Naive thymus-derived CD4-positive, alpha-beta T cell (primary cell): ENCODE measurements at regions of chr13 and their contacts with region 1.

Region 1: GRCh38 chr13:48975856-48976575 is at the start of gene FNDC3A:
- DNase-seq: peak; percentile 84 to 90 (median 86)
- ATAC-seq: peak; percentile 87
- H3K4me3 ChIP-seq: peak within 1 kb of the TSS; percentile 82
- H3K4me3 Mint-ChIP-seq: peak within 1 kb of the TSS; percentile 92 to 100 (median 98)
- H3K27ac ChIP-seq: peak within 1 kb of the TSS; percentile 95
- H3K27ac Mint-ChIP-seq: peak within 1 kb of the TSS; percentile 93 to 99 (median 99)
- H3K4me1 ChIP-seq: peaks cover 13 to 28% of the 10 kb centered on the region in 2 donors
- H3K4me1 Mint-ChIP-seq: peaks cover 35 to 69% (median 49%) of the 10 kb centered on the region in 7 donors
- H3K27me3 ChIP-seq: no peaks in the 10 kb centered on the region
- H3K27me3 Mint-ChIP-seq: peaks cover 0 to 6% (median 0%) of the 10 kb centered on the region in 5 donors
- total RNA-seq, gene FNDC3A: 34.2 to 46.4 (median 39.1) TPM

Region 2: DNA sequence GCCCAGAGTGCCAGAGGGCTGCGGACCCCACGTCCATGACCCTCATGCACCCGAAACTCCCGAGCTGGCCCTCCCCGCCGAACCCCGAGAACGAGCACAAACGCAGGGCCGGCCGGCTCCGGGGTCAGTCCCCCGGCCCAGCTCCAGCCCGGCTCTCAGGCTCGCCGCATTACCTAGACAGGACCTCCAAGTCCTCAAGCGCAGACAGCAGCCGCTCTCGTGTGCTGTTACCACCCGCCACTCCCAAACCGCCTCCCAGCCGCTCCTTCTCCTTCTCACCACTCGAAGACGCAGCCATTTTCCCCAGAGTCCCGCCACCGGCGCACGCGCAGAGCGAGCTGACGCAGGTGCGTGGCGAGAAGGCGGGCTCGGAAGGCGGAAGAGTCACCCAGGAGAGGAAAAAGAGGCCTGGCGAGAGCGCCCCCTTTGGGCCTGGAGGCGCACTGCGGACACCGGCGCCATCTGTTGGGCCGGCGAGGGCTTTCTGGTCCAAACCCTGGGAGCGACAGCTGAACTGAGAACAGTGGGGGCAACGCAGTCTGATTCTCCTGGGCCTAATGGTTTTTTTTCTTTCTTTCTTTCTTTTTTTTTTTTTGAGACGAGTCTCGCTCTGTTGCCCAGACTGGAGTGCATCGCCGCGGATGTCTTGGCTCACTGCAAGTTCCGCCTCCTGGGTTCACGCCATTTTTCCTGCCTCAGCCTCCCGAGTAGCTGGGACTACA is 881.1 kb before region 1 on chr13 and contains the start of gene MED4:
- CTCF ChIA-PET with region 1: no interaction called
- POLR2A ChIA-PET with region 1: interaction called, 6 read pairs
- intact Hi-C with region 1: loop called in 1 of 2 experiments (anchors 2 kb)
- DNase-seq: peak; percentile 94 to 99 (median 98)
- ATAC-seq: peak; percentile 100
- H3K4me3 ChIP-seq: peak within 1 kb of the TSS; percentile 90
- H3K4me3 Mint-ChIP-seq: peak within 1 kb of the TSS; percentile 94 to 99 (median 96)
- H3K27ac ChIP-seq: peak within 1 kb of the TSS; percentile 99
- H3K27ac Mint-ChIP-seq: peak within 1 kb of the TSS; percentile 92 to 98 (median 96)
- H3K4me1 ChIP-seq: peaks cover 13 to 26% of the 10 kb centered on the region in 2 donors
- H3K4me1 Mint-ChIP-seq: peaks cover 26 to 56% (median 48%) of the 10 kb centered on the region in 7 donors
- H3K27me3 ChIP-seq: no peaks in the 10 kb centered on the region
- H3K27me3 Mint-ChIP-seq: peaks cover 0 to 9% (median 0%) of the 10 kb centered on the region in 5 donors
- total RNA-seq, gene MED4: 43.4 to 60.9 (median 50.0) TPM

Region 3: DNA sequence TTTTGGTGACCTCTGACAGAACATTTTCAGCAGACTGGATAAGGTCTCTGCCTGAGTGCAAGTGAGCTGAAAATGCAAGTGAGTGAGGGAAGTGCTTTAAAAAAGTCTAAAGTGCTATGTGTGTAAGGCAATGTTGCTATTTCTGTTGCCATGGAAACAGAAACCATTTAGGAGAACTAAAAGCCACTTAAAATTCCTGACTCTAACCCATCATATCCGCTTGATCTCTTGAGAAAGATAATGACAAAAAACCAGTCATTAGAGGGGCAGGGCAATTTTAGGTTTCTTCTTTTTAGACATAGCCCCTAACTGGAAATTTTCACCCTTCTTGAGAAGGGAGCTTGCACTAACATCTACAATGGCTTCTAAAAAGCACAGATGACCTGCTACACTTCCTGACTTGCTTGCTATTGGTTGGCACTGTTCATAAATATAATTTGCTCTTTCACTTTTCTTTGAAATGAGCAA is 322.5 kb before region 1 on chr13 and contains the start of gene CYSLTR2:
- CTCF ChIA-PET with region 1: no interaction called
- POLR2A ChIA-PET with region 1: interaction called, 3 read pairs
- intact Hi-C with region 1: loop called (anchors 1 kb)
- DNase-seq: peak in 7 of 9 donors; percentile 63 to 89 (median 81)
- ATAC-seq: peak; percentile 89
- H3K4me3 ChIP-seq: peak within 1 kb of the TSS; percentile 49
- H3K4me3 Mint-ChIP-seq: peak within 1 kb of the TSS; percentile 77 to 98 (median 86)
- H3K27ac ChIP-seq: peak within 1 kb of the TSS; percentile 82
- H3K27ac Mint-ChIP-seq: peak within 1 kb of the TSS; percentile 86 to 99 (median 94)
- H3K4me1 ChIP-seq: peaks cover 11 to 26% of the 10 kb centered on the region in 2 donors
- H3K4me1 Mint-ChIP-seq: peaks cover 22 to 65% (median 56%) of the 10 kb centered on the region in 7 donors
- H3K27me3 ChIP-seq: no peaks in the 10 kb centered on the region
- H3K27me3 Mint-ChIP-seq: peaks cover 0 to 2% (median 0%) of the 10 kb centered on the region in 5 donors
- total RNA-seq, gene CYSLTR2: 2.1 to 6.5 (median 3.5) TPM

Region 4: DNA sequence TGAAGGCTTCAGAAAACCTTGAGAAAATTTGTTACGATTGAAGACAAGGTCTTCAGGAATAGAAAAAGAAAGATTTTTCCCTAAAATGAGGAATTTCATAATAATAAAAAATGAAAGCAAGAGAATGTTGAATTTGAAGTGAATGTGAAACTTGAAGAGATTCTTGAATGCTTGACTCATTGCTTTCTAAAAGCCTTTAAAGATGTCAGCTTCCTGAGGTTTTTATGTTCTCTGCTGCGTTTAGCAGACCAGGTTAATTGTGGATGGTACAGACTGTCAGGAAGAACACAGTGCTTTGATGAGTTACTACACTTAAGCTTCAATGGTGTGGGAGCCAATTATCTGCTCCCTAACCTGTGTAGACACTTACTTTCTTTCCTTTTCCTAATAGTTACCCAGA is 96.6 kb before region 1 on chr13:
- CTCF ChIA-PET with region 1: no interaction called
- POLR2A ChIA-PET with region 1: no interaction called
- intact Hi-C with region 1: loop called in 1 of 2 experiments (anchors 1 kb)
- DNase-seq: no peak
- ATAC-seq: no peak
- H3K4me3 ChIP-seq: no peak overlapping the region
- H3K4me3 Mint-ChIP-seq: peak overlapping the region in 1 of 10 donors; percentile 18
- H3K27ac ChIP-seq: no peak overlapping the region
- H3K27ac Mint-ChIP-seq: peak overlapping the region in 2 of 9 donors; percentile 0 to 25
- H3K4me1 ChIP-seq: peaks cover 0 to 3% of the 10 kb centered on the region in 2 donors
- H3K4me1 Mint-ChIP-seq: peaks cover 3 to 43% (median 9%) of the 10 kb centered on the region in 7 donors
- H3K27me3 ChIP-seq: no peaks in the 10 kb centered on the region
- H3K27me3 Mint-ChIP-seq: peaks cover 0 to 10% (median 0%) of the 10 kb centered on the region in 5 donors

Region 5: DNA sequence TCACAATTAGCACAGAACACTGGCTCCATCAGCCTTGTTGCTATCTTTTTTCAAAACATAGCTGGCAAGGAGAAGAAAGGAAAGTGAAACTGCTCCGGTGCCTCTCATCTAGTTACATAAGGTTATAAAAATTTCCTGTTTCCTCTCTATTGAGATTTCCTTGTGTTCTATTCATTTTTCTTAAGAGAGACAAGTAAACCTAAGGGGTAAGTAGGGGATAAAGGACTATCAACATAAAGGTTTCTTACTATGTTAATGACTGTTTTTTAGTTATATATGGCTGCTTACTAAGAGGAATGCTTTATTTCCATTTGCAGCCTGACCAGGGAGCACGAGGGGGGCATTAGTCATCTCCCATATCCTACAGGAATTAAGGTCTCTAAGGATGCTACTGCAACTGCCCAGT is 170.9 kb after region 1 on chr13:
- CTCF ChIA-PET with region 1: no interaction called
- POLR2A ChIA-PET with region 1: interaction called, 3 read pairs
- intact Hi-C with region 1: loop called (anchors 2 to 5 kb)
- DNase-seq: peak in 7 of 9 donors; percentile 39 to 72 (median 57)
- ATAC-seq: peak; percentile 73
- H3K4me3 ChIP-seq: peak overlapping the region; percentile 54
- H3K4me3 Mint-ChIP-seq: peak overlapping the region; percentile 73 to 94 (median 86)
- H3K27ac ChIP-seq: peak overlapping the region; percentile 69
- H3K27ac Mint-ChIP-seq: peak overlapping the region; percentile 86 to 98 (median 96)
- H3K4me1 ChIP-seq: peaks cover 4 to 14% of the 10 kb centered on the region in 2 donors
- H3K4me1 Mint-ChIP-seq: peaks cover 17 to 70% (median 58%) of the 10 kb centered on the region in 7 donors
- H3K27me3 ChIP-seq: no peaks in the 10 kb centered on the region
- H3K27me3 Mint-ChIP-seq: no peaks in the 10 kb centered on the region

Region 6: GRCh38 chr13:49272296-49272695 is 296.3 kb after region 1 on chr13:
- CTCF ChIA-PET with region 1: no interaction called
- POLR2A ChIA-PET with region 1: no interaction called
- intact Hi-C with region 1: no loop called
- DNase-seq: no peak
- ATAC-seq: no peak
- H3K4me3 ChIP-seq: no peak overlapping the region
- H3K4me3 Mint-ChIP-seq: no peak overlapping the region
- H3K27ac ChIP-seq: no peak overlapping the region
- H3K27ac Mint-ChIP-seq: no peak overlapping the region
- H3K4me1 ChIP-seq: no peaks in the 10 kb centered on the region
- H3K4me1 Mint-ChIP-seq: peaks cover 0 to 2% (median 0%) of the 10 kb centered on the region in 7 donors
- H3K27me3 ChIP-seq: no peaks in the 10 kb centered on the region
- H3K27me3 Mint-ChIP-seq: no peaks in the 10 kb centered on the region

Region 7: DNA sequence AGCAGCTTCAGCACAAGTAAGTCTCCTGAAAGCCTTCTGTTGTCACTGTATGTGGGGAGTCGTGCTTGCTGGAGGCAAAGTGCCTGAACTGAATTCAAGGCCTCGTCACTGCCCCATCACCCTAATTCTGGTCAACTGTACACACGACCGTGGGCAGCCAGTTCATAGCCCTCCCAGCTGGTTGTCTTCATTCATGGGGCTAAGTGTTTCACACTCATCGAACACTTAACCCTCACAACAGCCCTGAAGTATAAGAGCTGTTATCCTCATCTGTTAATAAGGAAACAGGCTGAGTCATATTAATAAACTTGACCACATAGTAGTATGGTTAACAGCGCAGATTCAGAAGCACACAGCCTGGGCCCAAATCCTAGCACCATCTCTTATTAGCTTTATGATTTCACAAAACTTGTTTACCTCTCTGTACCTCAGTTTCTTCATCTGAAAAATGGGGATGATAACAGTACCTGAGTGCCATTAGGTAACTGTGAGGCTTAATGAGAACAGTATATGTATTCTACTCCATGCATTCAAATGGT is 338.4 kb after region 1 on chr13:
- CTCF ChIA-PET with region 1: no interaction called
- POLR2A ChIA-PET with region 1: no interaction called
- intact Hi-C with region 1: no loop called
- DNase-seq: no peak
- ATAC-seq: no peak
- H3K4me3 ChIP-seq: no peak overlapping the region
- H3K4me3 Mint-ChIP-seq: no peak overlapping the region
- H3K27ac ChIP-seq: no peak overlapping the region
- H3K27ac Mint-ChIP-seq: no peak overlapping the region
- H3K4me1 ChIP-seq: no peaks in the 10 kb centered on the region
- H3K4me1 Mint-ChIP-seq: peaks cover 0 to 6% (median 0%) of the 10 kb centered on the region in 7 donors
- H3K27me3 ChIP-seq: no peaks in the 10 kb centered on the region
- H3K27me3 Mint-ChIP-seq: no peaks in the 10 kb centered on the region

Region 8: GRCh38 chr13:49585220-49586157 is 609.5 kb after region 1 on chr13 and contains the start of gene RCBTB1:
- CTCF ChIA-PET with region 1: no interaction called
- POLR2A ChIA-PET with region 1: no interaction called
- intact Hi-C with region 1: loop called (anchors 10 kb)
- DNase-seq: peak; percentile 47 to 74 (median 66)
- ATAC-seq: peak; percentile 97
- H3K4me3 ChIP-seq: peak within 1 kb of the TSS; percentile 56
- H3K4me3 Mint-ChIP-seq: peak within 1 kb of the TSS; percentile 83 to 100 (median 92)
- H3K27ac ChIP-seq: peak within 1 kb of the TSS; percentile 82
- H3K27ac Mint-ChIP-seq: peak within 1 kb of the TSS; percentile 86 to 96 (median 94)
- H3K4me1 ChIP-seq: peaks cover 10 to 16% of the 10 kb centered on the region in 2 donors
- H3K4me1 Mint-ChIP-seq: peaks cover 32 to 53% (median 50%) of the 10 kb centered on the region in 7 donors
- H3K27me3 ChIP-seq: no peaks in the 10 kb centered on the region
- H3K27me3 Mint-ChIP-seq: peaks cover 0 to 3% (median 0%) of the 10 kb centered on the region in 5 donors
- total RNA-seq, gene RCBTB1: 16.3 to 22.2 (median 20.4) TPM

Region 9: DNA sequence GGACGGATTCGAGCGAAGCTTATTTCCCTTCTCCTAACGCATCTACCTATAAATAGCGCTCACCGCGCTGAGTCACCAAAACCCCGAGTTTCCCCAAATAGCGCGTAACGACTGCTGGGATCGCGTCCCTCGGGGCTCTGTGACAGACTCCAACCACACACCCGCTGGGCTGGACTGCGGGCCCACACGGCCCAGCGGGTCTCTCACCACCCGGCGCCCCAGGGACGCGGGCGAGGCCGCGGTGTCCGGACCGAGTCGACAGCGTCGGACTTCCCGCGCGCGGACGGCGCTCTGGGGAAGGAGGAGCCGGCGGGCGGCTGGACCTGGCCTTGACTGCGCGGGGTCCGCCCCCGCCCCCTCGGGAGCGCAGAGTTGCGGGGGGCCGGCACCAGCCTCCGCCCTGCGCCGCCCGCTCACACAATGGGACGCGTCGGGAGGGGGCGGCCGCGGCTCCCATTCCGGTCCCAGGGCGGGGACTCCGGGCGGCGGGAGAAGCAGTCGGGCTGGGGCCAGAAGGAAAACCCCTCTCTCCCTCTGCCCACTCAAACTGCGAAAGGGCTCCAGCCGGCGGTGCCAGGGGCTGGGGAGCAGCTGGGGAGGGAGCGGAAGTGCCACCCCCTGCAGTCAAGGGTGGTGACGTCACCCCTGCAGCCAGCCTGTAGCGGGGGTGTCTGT is 1148.0 kb after region 1 on chr13:
- CTCF ChIA-PET with region 1: no interaction called
- POLR2A ChIA-PET with region 1: no interaction called
- intact Hi-C with region 1: loop called in 1 of 2 experiments (anchors 10 kb)
- DNase-seq: peak in 7 of 9 donors; percentile 46 to 88 (median 64)
- ATAC-seq: peak; percentile 82
- H3K4me3 ChIP-seq: peak overlapping the region; percentile 52
- H3K4me3 Mint-ChIP-seq: peak overlapping the region; percentile 86 to 96 (median 93)
- H3K27ac ChIP-seq: peak overlapping the region; percentile 95
- H3K27ac Mint-ChIP-seq: peak overlapping the region; percentile 90 to 99 (median 97)
- H3K4me1 ChIP-seq: peaks cover 24 to 29% of the 10 kb centered on the region in 2 donors
- H3K4me1 Mint-ChIP-seq: peaks cover 25 to 61% (median 50%) of the 10 kb centered on the region in 7 donors
- H3K27me3 ChIP-seq: peaks cover 0 to 11% of the 10 kb centered on the region in 2 donors
- H3K27me3 Mint-ChIP-seq: peaks cover 1 to 15% (median 12%) of the 10 kb centered on the region in 5 donors

Region 10: GRCh38 chr13:50928659-50929462 is 1952.8 kb after region 1 on chr13:
- CTCF ChIA-PET with region 1: no interaction called
- POLR2A ChIA-PET with region 1: no interaction called
- intact Hi-C with region 1: no loop called
- DNase-seq: no peak
- ATAC-seq: no peak
- H3K4me3 ChIP-seq: no peak overlapping the region
- H3K4me3 Mint-ChIP-seq: no peak overlapping the region
- H3K27ac ChIP-seq: no peak overlapping the region
- H3K27ac Mint-ChIP-seq: peak overlapping the region in 5 of 9 donors; percentile 5 to 82 (median 29)
- H3K4me1 ChIP-seq: no peaks in the 10 kb centered on the region
- H3K4me1 Mint-ChIP-seq: peaks cover 6 to 54% (median 42%) of the 10 kb centered on the region in 7 donors
- H3K27me3 ChIP-seq: no peaks in the 10 kb centered on the region
- H3K27me3 Mint-ChIP-seq: no peaks in the 10 kb centered on the region